ENCODE measurements at regions of chr17 and their contacts with region 1.

Region 1: DNA sequence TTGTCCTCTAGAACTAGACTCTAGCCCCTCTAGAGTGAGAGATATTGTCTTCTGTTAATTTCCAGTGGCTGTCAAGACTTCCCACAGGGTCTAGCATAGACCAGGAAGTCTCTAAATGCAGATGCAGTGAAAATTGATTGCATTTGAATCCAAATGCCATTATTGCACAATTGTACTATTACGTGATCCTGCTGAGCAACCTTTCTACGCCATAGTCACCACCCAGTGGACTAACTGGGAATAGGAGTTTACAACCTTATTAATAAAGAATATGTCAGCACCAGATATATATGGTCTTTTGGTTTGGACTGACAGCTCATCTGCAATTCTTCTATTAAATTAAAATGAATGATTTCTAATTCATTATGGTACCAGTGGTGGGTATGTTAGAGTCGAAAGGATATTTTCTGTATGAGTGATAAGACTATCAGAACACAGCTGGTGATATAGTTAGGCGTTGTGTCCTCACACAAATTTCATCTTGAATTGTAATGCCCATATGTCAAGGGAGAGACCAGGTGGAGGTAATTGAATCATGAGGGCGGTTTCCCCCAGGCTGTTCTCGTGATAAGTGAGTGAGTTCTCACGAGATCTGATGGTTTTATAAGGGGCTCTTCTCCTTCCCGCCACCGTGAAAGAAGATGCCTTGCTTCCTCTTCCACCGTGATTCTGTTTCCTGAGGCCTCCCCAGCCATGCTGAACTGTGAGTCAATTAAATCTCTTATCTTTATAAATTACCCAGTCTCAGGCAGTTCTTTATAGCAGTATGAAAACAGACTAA is 138.9 kb upstream of the CA10 start:
- DNase-seq: peak; percentile 50
- H3K4me3 Mint-ChIP-seq: no peak overlapping the region
- H3K27ac Mint-ChIP-seq: no peak overlapping the region
- H3K4me1 Mint-ChIP-seq: no peaks in the 10 kb centered on the region
- H3K27me3 Mint-ChIP-seq: peaks cover 94% of the 10 kb centered on the region
- CTCF ChIP-seq: peak; percentile 48

Region 2: GRCh38 chr17:52170963-52171572 is 126.4 kb before region 1 on chr17:
- CTCF ChIA-PET with region 1: interaction called, 7 read pairs
- POLR2A ChIA-PET with region 1: no interaction called
- intact Hi-C with region 1: loop called (anchors 1 kb)
- DNase-seq: peak; percentile 66
- H3K4me3 Mint-ChIP-seq: no peak overlapping the region
- H3K27ac Mint-ChIP-seq: no peak overlapping the region
- H3K4me1 Mint-ChIP-seq: no peaks in the 10 kb centered on the region
- H3K27me3 Mint-ChIP-seq: peaks cover 54% of the 10 kb centered on the region
- CTCF ChIP-seq: peak; percentile 63

Region 3: GRCh38 chr17:52191491-52191890 is 105.9 kb before region 1 on chr17:
- CTCF ChIA-PET with region 1: no interaction called
- POLR2A ChIA-PET with region 1: no interaction called
- intact Hi-C with region 1: no loop called
- DNase-seq: no peak
- H3K4me3 Mint-ChIP-seq: no peak overlapping the region
- H3K27ac Mint-ChIP-seq: no peak overlapping the region
- H3K4me1 Mint-ChIP-seq: no peaks in the 10 kb centered on the region
- H3K27me3 Mint-ChIP-seq: peaks cover 33% of the 10 kb centered on the region
- CTCF ChIP-seq: no peak

Region 4: DNA sequence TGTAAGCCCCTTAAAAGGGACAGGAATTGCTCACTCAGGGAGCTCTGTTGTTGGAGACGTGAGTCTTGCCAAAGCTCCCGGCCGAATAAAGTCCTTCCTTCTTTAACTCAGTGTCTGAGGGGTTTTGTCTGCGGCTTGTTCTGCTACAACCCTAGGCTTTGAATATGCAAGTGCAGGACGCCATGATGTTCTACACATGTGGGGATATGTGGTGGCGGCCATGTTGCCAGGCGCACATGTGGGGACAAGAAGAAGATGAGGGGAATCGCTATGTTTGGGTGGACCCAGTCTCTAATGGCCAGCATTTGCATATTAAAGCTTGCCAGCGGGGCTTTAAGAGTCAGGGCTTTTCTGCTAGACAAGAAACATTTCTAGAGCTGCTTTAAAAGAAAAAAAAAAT is 42.1 kb before region 1 on chr17:
- CTCF ChIA-PET with region 1: no interaction called
- POLR2A ChIA-PET with region 1: no interaction called
- intact Hi-C with region 1: loop called (anchors 2 kb)
- DNase-seq: no peak
- H3K4me3 Mint-ChIP-seq: no peak overlapping the region
- H3K27ac Mint-ChIP-seq: no peak overlapping the region
- H3K4me1 Mint-ChIP-seq: no peaks in the 10 kb centered on the region
- H3K27me3 Mint-ChIP-seq: peaks cover 10% of the 10 kb centered on the region
- CTCF ChIP-seq: no peak

Measured in MCF 10A (cell line).